ENCODE measurements at regions of chr12 and their contacts with region 1.

Region 1: GRCh38 chr12:121499929-121500793 is 80.7 kb downstream of the KDM2B start:
- DNase-seq: peak; percentile 69
- H3K4me3 Mint-ChIP-seq: no peak overlapping the region
- H3K27ac Mint-ChIP-seq: no peak overlapping the region
- H3K4me1 Mint-ChIP-seq: no peaks in the 10 kb centered on the region
- H3K27me3 Mint-ChIP-seq: no peaks in the 10 kb centered on the region
- CTCF ChIP-seq: peak; percentile 87

Region 2: GRCh38 chr12:121476477-121476876 is 23.7 kb before region 1 on chr12:
- CTCF ChIA-PET with region 1: interaction called, 23 read pairs
- POLR2A ChIA-PET with region 1: interaction called, 3 read pairs
- intact Hi-C with region 1: no loop called
- DNase-seq: no peak
- H3K4me3 Mint-ChIP-seq: no peak overlapping the region
- H3K27ac Mint-ChIP-seq: no peak overlapping the region
- H3K4me1 Mint-ChIP-seq: no peaks in the 10 kb centered on the region
- H3K27me3 Mint-ChIP-seq: no peaks in the 10 kb centered on the region
- CTCF ChIP-seq: no peak

Region 3: GRCh38 chr12:121626087-121626852 is 126.1 kb after region 1 on chr12 and contains the start of gene ORAI1:
- CTCF ChIA-PET with region 1: interaction called, 6 read pairs
- POLR2A ChIA-PET with region 1: no interaction called
- intact Hi-C with region 1: loop called (anchors 2 kb)
- DNase-seq: peak; percentile 93
- H3K4me3 Mint-ChIP-seq: peak within 1 kb of the TSS; percentile 76
- H3K27ac Mint-ChIP-seq: no peak within 1 kb of the TSS
- H3K4me1 Mint-ChIP-seq: peaks cover 4% of the 10 kb centered on the region
- H3K27me3 Mint-ChIP-seq: no peaks in the 10 kb centered on the region
- CTCF ChIP-seq: no peak
- total RNA-seq, gene ORAI1: 12.1 and 16.3 TPM in 2 replicates

Region 4: GRCh38 chr12:121668750-121669520 is 168.8 kb after region 1 on chr12:
- CTCF ChIA-PET with region 1: interaction called, 13 read pairs
- POLR2A ChIA-PET with region 1: no interaction called
- intact Hi-C with region 1: no loop called
- DNase-seq: peak; percentile 36
- H3K4me3 Mint-ChIP-seq: no peak overlapping the region
- H3K27ac Mint-ChIP-seq: no peak overlapping the region
- H3K4me1 Mint-ChIP-seq: peaks cover 10% of the 10 kb centered on the region
- H3K27me3 Mint-ChIP-seq: no peaks in the 10 kb centered on the region
- CTCF ChIP-seq: peak; percentile 39

Region 5: DNA sequence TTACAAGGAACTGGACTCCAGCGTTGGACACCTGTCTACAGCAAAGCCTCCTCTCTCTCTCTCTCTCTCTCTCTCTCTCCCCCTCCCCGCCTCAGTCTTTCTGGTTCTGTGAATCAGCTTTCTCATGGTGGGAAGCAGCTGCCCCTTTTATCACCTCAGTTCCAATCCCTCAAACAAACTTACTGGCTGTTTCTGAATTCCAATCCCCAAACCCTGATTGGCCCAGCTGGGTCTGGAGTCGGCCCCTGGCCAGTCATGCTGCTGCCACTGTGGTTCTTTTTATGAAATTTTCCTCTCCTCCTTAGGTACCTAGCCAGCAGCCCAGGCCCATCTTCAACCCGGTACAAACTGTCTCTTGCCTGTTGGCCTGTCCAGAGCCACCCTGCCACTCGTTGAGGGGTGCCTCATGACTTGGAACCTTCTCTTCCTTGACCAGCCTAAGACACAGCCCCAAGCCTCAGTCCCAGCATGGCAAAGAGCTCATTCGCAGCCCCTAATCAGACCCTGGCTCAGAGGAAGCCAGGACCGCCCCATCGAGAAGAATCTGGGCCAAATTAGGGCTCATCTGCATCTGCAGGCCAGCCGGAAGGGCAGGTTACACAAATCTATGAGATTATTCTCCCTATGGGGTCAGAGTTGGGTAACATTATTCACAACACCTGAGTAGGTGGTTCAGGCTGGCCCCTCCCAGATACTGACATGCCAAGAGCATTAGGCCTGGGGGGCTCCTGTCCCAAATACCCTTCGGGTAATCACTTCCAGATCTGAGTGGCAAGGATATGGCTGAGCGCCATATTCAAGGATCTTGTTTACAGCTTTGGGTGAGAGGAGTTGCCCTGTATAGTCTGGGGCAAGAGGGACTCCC is 178.8 kb after region 1 on chr12:
- CTCF ChIA-PET with region 1: interaction called, 31 read pairs
- POLR2A ChIA-PET with region 1: interaction called, 4 read pairs
- intact Hi-C with region 1: loop called (anchors 1 kb)
- DNase-seq: no peak
- H3K4me3 Mint-ChIP-seq: no peak overlapping the region
- H3K27ac Mint-ChIP-seq: no peak overlapping the region
- H3K4me1 Mint-ChIP-seq: no peaks in the 10 kb centered on the region
- H3K27me3 Mint-ChIP-seq: no peaks in the 10 kb centered on the region
- CTCF ChIP-seq: no peak